ENCODE measurements at regions of chr17 and their contacts with region 1.

Region 1: DNA sequence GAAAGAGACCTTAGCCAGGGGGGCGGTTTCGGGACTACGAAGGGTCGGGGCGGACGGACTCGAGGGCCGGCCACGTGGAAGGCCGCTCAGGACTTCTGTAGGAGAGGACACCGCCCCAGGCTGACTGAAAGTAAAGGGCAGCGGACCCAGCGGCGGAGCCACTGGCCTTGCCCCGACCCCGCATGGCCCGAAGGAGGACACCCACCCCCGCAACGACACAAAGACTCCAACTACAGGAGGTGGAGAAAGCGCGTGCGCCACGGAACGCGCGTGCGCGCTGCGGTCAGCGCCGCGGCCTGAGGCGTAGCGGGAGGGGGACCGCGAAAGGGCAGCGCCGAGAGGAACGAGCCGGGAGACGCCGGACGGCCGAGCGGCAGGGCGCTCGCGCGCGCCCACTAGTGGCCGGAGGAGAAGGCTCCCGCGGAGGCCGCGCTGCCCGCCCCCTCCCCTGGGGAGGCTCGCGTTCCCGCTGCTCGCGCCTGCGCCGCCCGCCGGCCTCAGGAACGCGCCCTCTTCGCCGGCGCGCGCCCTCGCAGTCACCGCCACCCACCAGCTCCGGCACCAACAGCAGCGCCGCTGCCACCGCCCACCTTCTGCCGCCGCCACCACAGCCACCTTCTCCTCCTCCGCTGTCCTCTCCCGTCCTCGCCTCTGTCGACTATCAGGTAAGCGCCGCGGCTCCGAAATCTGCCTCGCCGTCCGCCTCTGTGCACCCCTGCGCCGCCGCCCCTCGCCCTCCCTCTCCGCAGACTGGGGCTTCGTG is at the start of gene MAPT:
- DNase-seq: peak; percentile 88
- H3K4me3 Mint-ChIP-seq: peak within 1 kb of the TSS; percentile 77
- H3K27ac Mint-ChIP-seq: no peak within 1 kb of the TSS
- H3K4me1 Mint-ChIP-seq: peaks cover 24% of the 10 kb centered on the region
- H3K27me3 Mint-ChIP-seq: peaks cover 34% of the 10 kb centered on the region
- total RNA-seq, gene MAPT: 1.5 to 1.8 TPM

Region 2: DNA sequence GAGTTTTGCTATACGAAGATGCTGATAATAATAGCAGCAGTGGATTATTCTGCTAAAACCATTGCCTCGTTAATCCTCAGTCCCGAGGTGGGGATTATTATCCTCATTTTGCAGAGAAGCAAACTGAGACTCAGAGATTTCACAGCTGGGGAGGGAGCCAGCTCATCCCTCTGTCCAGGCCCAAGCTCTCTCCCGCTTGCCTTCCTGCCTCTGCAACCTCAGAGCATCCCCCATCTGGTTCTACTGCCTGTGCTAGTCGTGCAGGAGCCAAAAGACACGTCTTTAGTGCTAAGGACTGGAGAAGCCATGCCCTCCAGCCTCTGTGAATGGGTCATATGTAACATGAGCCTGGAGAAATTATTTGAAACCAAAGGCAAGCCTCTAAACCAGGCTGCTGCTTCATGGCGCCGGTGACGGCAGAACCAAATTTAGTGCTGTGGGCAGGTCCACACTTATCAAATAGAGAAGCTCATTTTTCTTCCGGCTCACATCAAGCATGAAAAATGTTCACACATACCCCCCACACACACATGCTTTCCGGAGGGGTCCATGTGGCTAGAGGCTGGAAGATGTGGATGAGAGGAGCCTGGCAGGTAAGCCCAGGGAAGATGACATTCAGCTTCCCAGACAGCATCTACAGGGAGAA is 13.7 kb after region 1 on chr17:
- CTCF ChIA-PET with region 1: interaction called, 16 read pairs
- POLR2A ChIA-PET with region 1: interaction called, 3 read pairs
- intact Hi-C with region 1: loop called (anchors 2 kb)
- DNase-seq: no peak
- H3K4me3 Mint-ChIP-seq: no peak overlapping the region
- H3K27ac Mint-ChIP-seq: peak overlapping the region; percentile 64
- H3K4me1 Mint-ChIP-seq: peaks cover 23% of the 10 kb centered on the region
- H3K27me3 Mint-ChIP-seq: peaks cover 4% of the 10 kb centered on the region

Region 3: DNA sequence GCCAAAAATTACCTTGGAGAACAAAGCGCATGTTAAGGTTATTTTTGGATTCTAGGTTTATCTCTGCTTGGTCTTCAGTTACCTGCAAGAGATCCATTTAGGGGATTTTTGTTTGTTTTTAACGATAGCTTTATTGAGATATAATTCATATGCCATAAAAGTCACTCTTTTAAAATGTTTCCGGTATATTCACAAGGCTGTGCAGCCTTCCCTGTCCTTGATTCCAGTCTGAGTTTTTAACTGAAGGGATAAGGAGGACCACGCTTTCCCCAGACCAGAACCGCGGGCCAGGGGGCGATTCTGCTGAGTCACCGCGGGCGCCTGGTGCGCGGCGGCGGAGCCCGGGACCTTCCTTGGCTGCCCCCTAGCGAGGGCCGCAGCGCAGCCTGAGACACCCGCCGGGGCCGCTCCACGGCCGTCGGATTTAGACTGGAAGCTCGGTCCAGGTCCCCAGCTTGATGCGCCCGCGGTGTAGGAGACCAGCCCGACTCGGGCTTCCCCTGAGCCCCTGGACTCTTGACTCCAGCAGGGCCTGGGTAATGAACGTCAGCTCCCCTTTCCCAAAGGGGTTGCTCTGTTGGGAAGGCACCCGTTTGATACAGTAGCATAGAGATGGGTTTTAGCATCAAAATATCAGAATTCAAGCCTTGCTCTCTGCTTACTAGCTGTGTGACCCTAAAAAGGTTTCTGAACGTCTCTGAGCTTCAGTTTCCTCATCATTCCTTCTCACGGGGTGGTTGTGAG is 54.9 kb after region 1 on chr17:
- CTCF ChIA-PET with region 1: interaction called, 13 read pairs
- POLR2A ChIA-PET with region 1: no interaction called
- intact Hi-C with region 1: no loop called
- DNase-seq: peak; percentile 79
- H3K4me3 Mint-ChIP-seq: peak overlapping the region; percentile 64
- H3K27ac Mint-ChIP-seq: no peak overlapping the region
- H3K4me1 Mint-ChIP-seq: peaks cover 11% of the 10 kb centered on the region
- H3K27me3 Mint-ChIP-seq: peaks cover 14% of the 10 kb centered on the region

Region 4: GRCh38 chr17:45976755-45977505 is 82.7 kb after region 1 on chr17:
- CTCF ChIA-PET with region 1: no interaction called
- POLR2A ChIA-PET with region 1: no interaction called
- intact Hi-C with region 1: no loop called
- DNase-seq: no peak
- H3K4me3 Mint-ChIP-seq: no peak overlapping the region
- H3K27ac Mint-ChIP-seq: no peak overlapping the region
- H3K4me1 Mint-ChIP-seq: no peaks in the 10 kb centered on the region
- H3K27me3 Mint-ChIP-seq: peaks cover 2% of the 10 kb centered on the region

Region 5: GRCh38 chr17:46154151-46154816 is 260.1 kb after region 1 on chr17:
- CTCF ChIA-PET with region 1: no interaction called
- POLR2A ChIA-PET with region 1: no interaction called
- intact Hi-C with region 1: no loop called
- DNase-seq: peak; percentile 65
- H3K4me3 Mint-ChIP-seq: no peak overlapping the region
- H3K27ac Mint-ChIP-seq: peak overlapping the region; percentile 71
- H3K4me1 Mint-ChIP-seq: peaks cover 84% of the 10 kb centered on the region
- H3K27me3 Mint-ChIP-seq: no peaks in the 10 kb centered on the region